AG04450 (cell line): ENCODE measurements at regions of chr9 and their contacts with region 1.

Region 1: GRCh38 chr9:70111042-70111602 is 67.5 kb downstream of the MAMDC2 start:
- DNase-seq: peak; percentile 53
- H3K4me3 ChIP-seq: no peak overlapping the region
- H3K27ac ChIP-seq: no peak overlapping the region
- H3K27me3 ChIP-seq: no peaks in the 10 kb centered on the region
- CTCF ChIP-seq: peak; percentile 89

Region 2: DNA sequence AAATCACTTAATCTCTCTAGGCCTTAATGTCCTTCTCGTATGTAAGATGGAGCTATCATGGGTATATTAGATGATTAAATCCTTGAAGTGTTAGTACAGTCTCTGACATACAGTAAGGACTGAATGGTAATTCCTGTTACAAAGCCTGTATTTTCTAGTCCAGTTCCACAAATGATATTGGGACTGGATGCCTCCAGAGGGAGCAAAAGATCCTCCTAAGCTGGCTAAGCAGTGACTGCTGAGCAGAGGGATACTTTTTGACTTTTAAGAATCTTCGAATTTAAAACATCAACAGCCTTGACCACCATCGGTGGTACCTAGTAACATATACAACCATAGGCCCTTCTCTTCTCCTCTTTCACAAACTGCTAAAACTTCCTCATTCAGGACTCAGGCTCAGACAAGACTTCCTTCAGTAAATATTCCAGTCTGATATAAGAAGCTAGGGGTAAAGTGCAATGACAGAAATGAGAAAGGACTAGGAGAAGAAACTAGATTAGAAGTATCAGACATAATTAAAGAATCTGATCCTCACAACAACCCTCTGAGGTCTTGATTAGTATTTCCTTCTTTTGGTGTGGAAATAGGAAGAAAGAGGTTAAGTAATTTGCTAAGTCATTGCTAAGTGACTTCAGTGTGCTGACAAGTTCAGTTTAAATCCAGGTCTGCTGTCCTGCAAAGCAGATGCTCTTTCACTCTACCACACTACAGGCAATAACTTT is 365.2 kb before region 1 on chr9:
- CTCF ChIA-PET with region 1: interaction called, 12 read pairs
- POLR2A ChIA-PET with region 1: no interaction called
- DNase-seq: no peak
- H3K4me3 ChIP-seq: no peak overlapping the region
- H3K27ac ChIP-seq: no peak overlapping the region
- H3K27me3 ChIP-seq: no peaks in the 10 kb centered on the region
- CTCF ChIP-seq: peak; percentile 45

Region 3: GRCh38 chr9:69919461-69920061 is 191.6 kb before region 1 on chr9:
- CTCF ChIA-PET with region 1: interaction called, 59 read pairs
- POLR2A ChIA-PET with region 1: no interaction called
- DNase-seq: peak; percentile 24
- H3K4me3 ChIP-seq: no peak overlapping the region
- H3K27ac ChIP-seq: no peak overlapping the region
- H3K27me3 ChIP-seq: no peaks in the 10 kb centered on the region
- CTCF ChIP-seq: peak; percentile 75

Region 4: GRCh38 chr9:69961830-69962229 is 149.3 kb before region 1 on chr9:
- CTCF ChIA-PET with region 1: interaction called, 213 read pairs
- POLR2A ChIA-PET with region 1: no interaction called
- DNase-seq: no peak
- H3K4me3 ChIP-seq: no peak overlapping the region
- H3K27ac ChIP-seq: no peak overlapping the region
- H3K27me3 ChIP-seq: no peaks in the 10 kb centered on the region
- CTCF ChIP-seq: no peak

Region 5: GRCh38 chr9:70080481-70081119 is 30.5 kb before region 1 on chr9:
- CTCF ChIA-PET with region 1: interaction called, 46 read pairs
- POLR2A ChIA-PET with region 1: no interaction called
- DNase-seq: peak; percentile 27
- H3K4me3 ChIP-seq: no peak overlapping the region
- H3K27ac ChIP-seq: no peak overlapping the region
- H3K27me3 ChIP-seq: no peaks in the 10 kb centered on the region
- CTCF ChIP-seq: no peak

Region 6: DNA sequence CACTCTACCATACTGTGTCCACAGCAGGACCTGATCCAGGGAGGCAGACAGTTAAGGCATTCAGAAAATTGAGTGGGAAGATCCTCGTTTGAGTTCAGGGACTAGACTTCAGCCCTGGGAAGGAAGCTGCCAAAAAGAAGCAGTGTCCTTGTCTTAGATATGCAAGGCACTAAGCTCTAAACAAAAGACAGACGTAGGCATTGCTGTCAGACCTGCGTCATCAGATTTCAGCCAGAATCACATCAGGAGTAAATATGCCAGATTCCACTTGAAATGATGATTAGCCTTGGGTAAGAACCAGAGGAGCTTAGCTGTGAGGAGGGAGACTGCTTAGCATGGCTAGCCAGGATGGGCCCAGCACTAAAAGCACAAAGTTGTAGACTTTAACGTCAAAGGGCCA is 10.8 kb before region 1 on chr9:
- CTCF ChIA-PET with region 1: interaction called, 55 read pairs
- POLR2A ChIA-PET with region 1: no interaction called
- DNase-seq: no peak
- H3K4me3 ChIP-seq: no peak overlapping the region
- H3K27ac ChIP-seq: no peak overlapping the region
- H3K27me3 ChIP-seq: no peaks in the 10 kb centered on the region
- CTCF ChIP-seq: no peak

Region 7: GRCh38 chr9:70229579-70229978 is 118.5 kb after region 1 on chr9:
- CTCF ChIA-PET with region 1: interaction called, 35 read pairs
- POLR2A ChIA-PET with region 1: no interaction called
- DNase-seq: no peak
- H3K4me3 ChIP-seq: no peak overlapping the region
- H3K27ac ChIP-seq: no peak overlapping the region
- H3K27me3 ChIP-seq: no peaks in the 10 kb centered on the region
- CTCF ChIP-seq: peak; percentile 44